IMR-90 (cell line): ENCODE measurements at regions of chr3 and their contacts with region 1.

Region 1: GRCh38 chr3:121545574-121546455 is at the start of gene POLQ:
- DNase-seq: peak; percentile 95
- ATAC-seq: peak; percentile 96
- H3K4me3 ChIP-seq: peak within 1 kb of the TSS; percentile 69
- H3K27ac ChIP-seq: peak within 1 kb of the TSS; percentile 53
- H3K4me1 ChIP-seq: no peaks in the 10 kb centered on the region
- H3K27me3 ChIP-seq: no peaks in the 10 kb centered on the region
- CTCF ChIP-seq: no peak
- POLR2A ChIP-seq: peak; percentile 66; the same call in 1 of the 2 replicates
- RAD21 ChIP-seq: no peak
- total RNA-seq, gene POLQ: 5.0 and 7.5 TPM in 2 replicates

Region 2: GRCh38 chr3:121749276-121750086 is 203.7 kb after region 1 on chr3 and contains the start of gene GOLGB1:
- CTCF ChIA-PET with region 1: no interaction called
- POLR2A ChIA-PET with region 1: no interaction called
- dilution Hi-C with region 1: no loop called
- in situ Hi-C with region 1: no loop called
- intact Hi-C with region 1: loop called (anchors 5 kb)
- DNase-seq: peak; percentile 100
- ATAC-seq: peak; percentile 93
- H3K4me3 ChIP-seq: peak within 1 kb of the TSS; percentile 72
- H3K27ac ChIP-seq: peak within 1 kb of the TSS; percentile 74
- H3K4me1 ChIP-seq: no peaks in the 10 kb centered on the region
- H3K27me3 ChIP-seq: no peaks in the 10 kb centered on the region
- CTCF ChIP-seq: 0 out of 2 replicates have a peak, but pooled peaks have one; percentile 1
- POLR2A ChIP-seq: peak; percentile 99
- RAD21 ChIP-seq: no peak
- total RNA-seq, gene GOLGB1: 30.3 and 56.1 TPM in 2 replicates

Region 3: DNA sequence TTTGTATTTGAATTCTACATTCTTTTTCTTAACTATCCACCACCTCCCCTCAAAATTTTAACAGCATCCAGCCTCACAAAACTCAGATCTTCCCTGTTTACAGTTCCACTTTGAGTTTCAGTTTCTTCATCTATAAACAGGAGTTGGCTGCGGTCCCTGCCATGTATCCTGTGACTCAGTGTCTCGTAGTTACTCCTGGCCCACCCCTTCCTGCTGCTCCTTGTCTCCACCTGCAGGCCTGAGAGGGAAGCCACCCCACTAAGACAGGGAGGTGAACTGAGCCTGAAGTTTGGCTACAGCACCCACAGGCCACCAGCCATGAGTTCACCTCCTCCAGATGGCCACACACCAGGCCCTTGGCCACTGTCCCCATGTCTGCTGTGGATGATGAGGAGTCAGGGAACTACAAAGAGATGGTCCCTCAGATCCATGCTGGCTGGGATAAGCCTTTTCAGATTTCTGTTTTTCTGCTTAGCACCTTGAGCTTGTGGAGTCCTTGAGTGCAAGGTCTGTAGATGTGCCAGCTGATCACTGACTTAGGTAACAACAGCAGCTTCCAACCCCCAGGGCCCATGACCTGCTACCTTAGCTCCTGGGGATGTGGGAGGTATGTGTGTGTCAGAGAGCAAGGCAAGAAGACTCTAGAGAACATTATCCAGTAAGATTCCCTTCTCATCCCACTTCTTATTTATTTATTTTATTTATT is 546.8 kb after region 1 on chr3:
- CTCF ChIA-PET with region 1: interaction called, 3 read pairs
- POLR2A ChIA-PET with region 1: no interaction called
- dilution Hi-C with region 1: no loop called
- in situ Hi-C with region 1: no loop called
- intact Hi-C with region 1: loop called (anchors 2 kb)
- DNase-seq: peak; percentile 31
- ATAC-seq: peak; percentile 54; the same call in 1 of the 2 replicates
- H3K4me3 ChIP-seq: no peak overlapping the region
- H3K27ac ChIP-seq: no peak overlapping the region
- H3K4me1 ChIP-seq: no peaks in the 10 kb centered on the region
- H3K27me3 ChIP-seq: peaks cover 2% of the 10 kb centered on the region
- CTCF ChIP-seq: peak; percentile 40
- POLR2A ChIP-seq: no peak
- RAD21 ChIP-seq: peak; percentile 35

Region 4: DNA sequence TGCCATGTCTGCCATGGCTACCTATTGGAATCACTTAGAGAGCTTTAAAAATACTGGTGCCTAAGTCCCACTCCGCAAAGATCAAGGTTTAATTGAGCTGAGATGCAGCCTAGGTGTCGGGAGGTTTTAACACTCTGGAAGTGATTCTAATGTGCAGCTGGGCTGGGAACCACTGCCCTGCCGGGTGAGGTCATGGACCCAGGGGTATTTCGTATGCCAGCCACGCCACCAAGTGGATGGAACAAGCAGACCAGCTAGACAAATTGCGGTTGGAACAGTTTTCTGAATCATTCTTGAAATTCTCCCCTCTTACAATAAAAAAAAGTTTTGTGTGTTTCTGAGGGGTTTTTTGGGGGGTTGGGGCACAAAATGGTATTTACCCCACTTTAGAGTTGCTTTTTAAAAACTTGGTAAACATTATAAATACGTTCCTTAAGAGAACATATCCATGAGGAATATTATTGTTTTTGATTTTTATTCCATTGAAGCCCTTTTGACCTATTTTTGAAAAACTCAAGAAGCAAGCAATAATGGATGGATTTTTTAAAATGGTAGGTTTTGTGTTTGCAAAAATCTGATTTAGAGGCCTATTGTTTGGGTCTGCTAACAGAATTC is 713.0 kb after region 1 on chr3:
- CTCF ChIA-PET with region 1: interaction called, 3 read pairs
- POLR2A ChIA-PET with region 1: no interaction called
- dilution Hi-C with region 1: no loop called
- in situ Hi-C with region 1: loop called (anchors 10 kb)
- intact Hi-C with region 1: loop called (anchors 1 kb)
- DNase-seq: peak; percentile 56
- ATAC-seq: peak; percentile 82
- H3K4me3 ChIP-seq: no peak overlapping the region
- H3K27ac ChIP-seq: no peak overlapping the region
- H3K4me1 ChIP-seq: no peaks in the 10 kb centered on the region; the same call in 1 of the 2 replicates
- H3K27me3 ChIP-seq: peaks cover 15% of the 10 kb centered on the region
- CTCF ChIP-seq: peak; percentile 73
- POLR2A ChIP-seq: no peak
- RAD21 ChIP-seq: peak; percentile 80

Region 5: DNA sequence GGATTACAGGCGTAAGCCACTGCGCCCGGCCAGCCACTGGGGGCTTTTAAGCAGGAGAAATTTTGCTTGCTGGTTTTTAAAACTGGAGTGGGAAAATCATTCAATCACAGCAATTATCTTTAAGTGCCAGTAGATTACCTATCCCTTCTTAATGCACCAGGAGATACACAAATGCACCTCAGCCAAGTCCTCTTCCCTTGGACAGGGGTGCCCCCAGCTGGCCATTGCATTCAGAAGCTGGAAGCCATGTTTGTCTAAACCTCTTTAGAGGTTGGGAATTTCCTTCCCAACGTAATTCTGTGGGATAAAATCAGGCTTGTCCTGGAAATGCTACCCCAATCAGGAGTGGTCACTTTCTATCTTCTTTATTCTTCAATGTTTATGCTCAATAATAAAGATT is 810.6 kb after region 1 on chr3:
- CTCF ChIA-PET with region 1: no interaction called
- POLR2A ChIA-PET with region 1: interaction called, 5 read pairs
- dilution Hi-C with region 1: no loop called
- in situ Hi-C with region 1: no loop called
- intact Hi-C with region 1: loop called (anchors 2 kb)
- DNase-seq: peak; percentile 54
- ATAC-seq: peak; percentile 75
- H3K4me3 ChIP-seq: no peak overlapping the region
- H3K27ac ChIP-seq: no peak overlapping the region
- H3K4me1 ChIP-seq: no peaks in the 10 kb centered on the region
- H3K27me3 ChIP-seq: no peaks in the 10 kb centered on the region
- CTCF ChIP-seq: peak; percentile 55
- POLR2A ChIP-seq: no peak
- RAD21 ChIP-seq: peak; percentile 66

Region 6: GRCh38 chr3:123028233-123028828 is 1482.5 kb after region 1 on chr3:
- CTCF ChIA-PET with region 1: no interaction called
- POLR2A ChIA-PET with region 1: no interaction called
- dilution Hi-C with region 1: no loop called
- in situ Hi-C with region 1: no loop called
- intact Hi-C with region 1: loop called (anchors 5 kb)
- DNase-seq: peak; percentile 72
- ATAC-seq: peak; percentile 79
- H3K4me3 ChIP-seq: peak overlapping the region; percentile 24
- H3K27ac ChIP-seq: no peak overlapping the region
- H3K4me1 ChIP-seq: peaks cover 5% of the 10 kb centered on the region; the same call in 1 of the 2 replicates
- H3K27me3 ChIP-seq: peaks cover 87% of the 10 kb centered on the region
- CTCF ChIP-seq: peak; percentile 65
- POLR2A ChIP-seq: no peak
- RAD21 ChIP-seq: peak; percentile 73